ENCODE measurements at regions of chrX and their contacts with region 1.

Region 1: GRCh38 chrX:49269010-49269767 is 404 bp upstream of the PPP1R3F start:
- DNase-seq: peak; percentile 96
- ATAC-seq: peak; percentile 85
- H3K4me3 ChIP-seq: peak overlapping the region; percentile 62 to 77 (median 71)
- H3K4me3 Mint-ChIP-seq: peak overlapping the region; percentile 95
- H3K27ac ChIP-seq: peak overlapping the region; percentile 91 to 98
- H3K27ac Mint-ChIP-seq: peak overlapping the region; percentile 98
- H3K4me1 ChIP-seq: peaks cover 23 to 35% of the 10 kb centered on the region in 2 donors
- H3K4me1 Mint-ChIP-seq: peaks cover 35% of the 10 kb centered on the region
- H3K27me3 ChIP-seq: no peaks in the 10 kb centered on the region
- H3K27me3 Mint-ChIP-seq: no peaks in the 10 kb centered on the region
- CTCF ChIP-seq: no peak

Region 2: GRCh38 chrX:47658684-47659515 is 1610.3 kb before region 1 on chrX and contains the start of gene UXT:
- CTCF ChIA-PET with region 1: no interaction called
- POLR2A ChIA-PET with region 1: no interaction called
- intact Hi-C with region 1: loop called (anchors 5 kb)
- DNase-seq: peak; percentile 94
- ATAC-seq: peak; percentile 82
- H3K4me3 ChIP-seq: peak within 1 kb of the TSS; percentile 53 to 80 (median 71)
- H3K4me3 Mint-ChIP-seq: peak within 1 kb of the TSS; percentile 95
- H3K27ac ChIP-seq: peak within 1 kb of the TSS; percentile 98
- H3K27ac Mint-ChIP-seq: peak within 1 kb of the TSS; percentile 100
- H3K4me1 ChIP-seq: peaks cover 10 to 16% of the 10 kb centered on the region in 2 donors
- H3K4me1 Mint-ChIP-seq: peaks cover 16% of the 10 kb centered on the region
- H3K27me3 ChIP-seq: no peaks in the 10 kb centered on the region
- H3K27me3 Mint-ChIP-seq: no peaks in the 10 kb centered on the region
- CTCF ChIP-seq: no peak
- total RNA-seq, gene UXT: 177 and 183 TPM in 2 replicates

Region 3: DNA sequence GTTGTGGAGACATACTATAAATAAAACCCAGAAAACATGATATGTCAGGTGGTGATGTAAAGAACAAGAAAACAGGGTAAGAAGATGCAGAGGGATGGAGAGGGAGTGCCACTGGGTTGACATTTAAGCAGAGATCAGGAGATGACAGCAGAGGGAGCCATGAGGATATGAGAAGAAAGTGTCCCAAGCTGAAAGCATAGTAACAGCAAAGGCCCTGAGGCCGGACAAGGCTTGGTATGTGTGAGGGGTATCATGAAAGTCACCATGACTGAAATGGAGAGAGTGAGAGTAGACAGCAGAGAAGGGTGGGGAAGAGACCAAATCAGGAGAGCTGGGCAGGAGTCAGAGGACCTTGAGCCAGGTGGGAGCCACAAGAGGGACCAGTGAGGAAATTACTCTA is 149.1 kb before region 1 on chrX:
- CTCF ChIA-PET with region 1: no interaction called
- POLR2A ChIA-PET with region 1: no interaction called
- intact Hi-C with region 1: loop called (anchors 1 kb)
- DNase-seq: no peak
- ATAC-seq: no peak
- H3K4me3 ChIP-seq: no peak overlapping the region
- H3K4me3 Mint-ChIP-seq: peak overlapping the region; percentile 0
- H3K27ac ChIP-seq: no peak overlapping the region
- H3K27ac Mint-ChIP-seq: no peak overlapping the region
- H3K4me1 ChIP-seq: peaks cover 4 to 18% of the 10 kb centered on the region in 2 donors
- H3K4me1 Mint-ChIP-seq: peaks cover 29% of the 10 kb centered on the region
- H3K27me3 ChIP-seq: no peaks in the 10 kb centered on the region
- H3K27me3 Mint-ChIP-seq: no peaks in the 10 kb centered on the region
- CTCF ChIP-seq: no peak

Region 4: DNA sequence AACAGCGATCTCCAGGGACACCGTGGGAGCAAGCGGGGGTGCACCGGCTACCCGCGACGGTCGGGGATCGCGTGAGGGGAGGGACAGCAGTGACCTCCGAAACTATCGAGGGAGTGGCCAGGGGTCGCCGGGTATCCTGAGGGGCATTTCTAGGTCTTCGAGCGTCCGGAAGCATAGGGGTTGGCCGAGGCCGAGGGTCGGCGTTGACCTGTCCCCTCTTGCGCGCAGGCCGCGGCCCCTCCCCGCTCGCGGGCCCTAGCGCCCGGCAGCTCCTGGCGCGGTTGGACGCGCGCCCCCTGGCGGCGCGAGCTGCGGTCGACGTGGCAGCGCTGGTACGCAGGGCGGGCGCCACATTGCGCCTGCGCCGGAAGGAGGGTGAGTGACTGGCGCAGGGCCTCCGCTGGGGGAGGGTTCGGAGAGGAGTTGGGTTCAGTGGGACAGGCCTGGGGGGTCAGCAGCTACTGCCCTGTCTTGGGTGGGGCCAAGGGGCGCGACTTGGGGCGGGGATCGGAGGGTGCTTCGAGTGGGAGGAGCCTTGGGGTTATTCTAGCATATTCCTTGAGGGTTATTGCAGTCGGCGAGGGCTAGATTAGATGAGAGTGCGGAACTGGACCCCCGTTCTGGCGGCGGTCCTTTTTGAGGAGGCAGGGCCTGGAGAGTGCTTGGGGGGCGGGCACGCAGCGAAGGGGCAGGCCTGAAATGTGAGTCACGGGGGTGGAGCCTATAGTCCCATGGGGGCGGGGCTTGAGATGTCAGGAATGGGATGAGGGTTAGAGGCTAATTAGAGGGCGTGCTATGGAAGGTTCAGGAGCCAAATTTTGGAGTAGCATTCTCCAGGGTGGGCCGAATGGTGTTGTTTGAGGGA is 105.4 kb before region 1 on chrX:
- CTCF ChIA-PET with region 1: interaction called, 4 read pairs
- POLR2A ChIA-PET with region 1: no interaction called
- intact Hi-C with region 1: loop called (anchors 1 kb)
- DNase-seq: peak; percentile 89
- ATAC-seq: peak; percentile 56
- H3K4me3 ChIP-seq: peak overlapping the region in 4 of 5 experiments; percentile 39 to 62 (median 46)
- H3K4me3 Mint-ChIP-seq: peak overlapping the region; percentile 86
- H3K27ac ChIP-seq: peak overlapping the region; percentile 79 to 82
- H3K27ac Mint-ChIP-seq: peak overlapping the region; percentile 96
- H3K4me1 ChIP-seq: peaks cover 5 to 38% of the 10 kb centered on the region in 2 donors
- H3K4me1 Mint-ChIP-seq: peaks cover 26% of the 10 kb centered on the region
- H3K27me3 ChIP-seq: no peaks in the 10 kb centered on the region
- H3K27me3 Mint-ChIP-seq: no peaks in the 10 kb centered on the region
- CTCF ChIP-seq: peak; percentile 67

Region 5: DNA sequence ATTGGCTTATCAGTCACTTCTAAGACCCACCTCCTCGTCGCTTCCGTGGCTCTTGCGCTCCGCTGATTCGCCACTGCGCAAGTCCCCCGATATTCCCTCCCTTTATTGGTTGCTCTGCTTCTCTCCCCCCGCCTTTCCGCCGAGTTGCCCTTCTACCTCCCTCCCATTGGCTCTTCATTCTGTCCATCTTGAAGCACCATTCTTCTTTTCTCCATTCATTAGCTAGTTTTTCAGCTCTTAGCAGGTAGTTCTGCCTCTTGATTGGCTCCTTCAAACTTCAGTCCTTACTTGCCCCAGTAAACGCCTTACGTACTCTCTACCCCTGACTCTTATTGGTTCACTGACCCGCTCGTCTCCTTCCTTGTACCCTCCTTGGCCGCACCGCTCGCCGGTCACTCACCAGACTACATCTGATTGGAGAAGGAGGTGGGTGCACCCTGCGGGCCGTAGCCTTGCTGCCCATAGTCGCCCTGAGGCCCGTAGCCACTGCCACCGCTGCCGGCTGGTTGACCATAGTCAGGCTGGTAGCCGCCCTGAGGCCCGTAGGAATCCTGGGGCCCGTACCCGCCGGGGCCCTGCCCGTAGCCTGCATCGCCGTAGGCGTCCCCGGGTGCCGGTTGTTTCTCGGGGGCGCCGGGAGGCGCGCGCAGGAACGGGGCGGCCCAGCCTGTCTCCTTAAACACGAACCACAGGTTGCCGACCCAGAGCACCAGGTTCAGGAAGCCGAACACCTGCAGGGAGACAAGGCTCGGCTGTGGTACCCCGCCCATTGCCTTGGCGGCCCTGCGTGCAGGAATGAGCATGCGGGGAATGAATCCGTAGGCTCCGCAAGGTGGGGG is 77.9 kb before region 1 on chrX:
- CTCF ChIA-PET with region 1: interaction called, 5 read pairs
- POLR2A ChIA-PET with region 1: interaction called, 7 read pairs
- intact Hi-C with region 1: loop called (anchors 1 kb)
- DNase-seq: peak; percentile 95
- ATAC-seq: peak; percentile 84
- H3K4me3 ChIP-seq: peak overlapping the region in 4 of 5 experiments; percentile 62 to 78 (median 70)
- H3K4me3 Mint-ChIP-seq: peak overlapping the region; percentile 95
- H3K27ac ChIP-seq: peak overlapping the region; percentile 55 to 71
- H3K27ac Mint-ChIP-seq: peak overlapping the region; percentile 96
- H3K4me1 ChIP-seq: peaks cover 0 to 20% of the 10 kb centered on the region in 2 donors
- H3K4me1 Mint-ChIP-seq: peaks cover 28% of the 10 kb centered on the region
- H3K27me3 ChIP-seq: no peaks in the 10 kb centered on the region
- H3K27me3 Mint-ChIP-seq: no peaks in the 10 kb centered on the region
- CTCF ChIP-seq: no peak

Region 6: GRCh38 chrX:49199906-49200771 is 69.0 kb before region 1 on chrX and contains the start of gene SYP:
- CTCF ChIA-PET with region 1: no interaction called
- POLR2A ChIA-PET with region 1: no interaction called
- intact Hi-C with region 1: loop called (anchors 1 kb)
- DNase-seq: peak; percentile 91
- ATAC-seq: peak; percentile 99
- H3K4me3 ChIP-seq: peak within 1 kb of the TSS; percentile 35 to 59 (median 57)
- H3K4me3 Mint-ChIP-seq: peak within 1 kb of the TSS; percentile 77
- H3K27ac ChIP-seq: peak within 1 kb of the TSS; percentile 57 to 72
- H3K27ac Mint-ChIP-seq: peak within 1 kb of the TSS; percentile 70
- H3K4me1 ChIP-seq: peaks cover 4 to 13% of the 10 kb centered on the region in 2 donors
- H3K4me1 Mint-ChIP-seq: peaks cover 6% of the 10 kb centered on the region
- H3K27me3 ChIP-seq: no peaks in the 10 kb centered on the region
- H3K27me3 Mint-ChIP-seq: no peaks in the 10 kb centered on the region
- CTCF ChIP-seq: no peak
- total RNA-seq, gene SYP: 1.2 TPM in 2 replicates

Region 7: DNA sequence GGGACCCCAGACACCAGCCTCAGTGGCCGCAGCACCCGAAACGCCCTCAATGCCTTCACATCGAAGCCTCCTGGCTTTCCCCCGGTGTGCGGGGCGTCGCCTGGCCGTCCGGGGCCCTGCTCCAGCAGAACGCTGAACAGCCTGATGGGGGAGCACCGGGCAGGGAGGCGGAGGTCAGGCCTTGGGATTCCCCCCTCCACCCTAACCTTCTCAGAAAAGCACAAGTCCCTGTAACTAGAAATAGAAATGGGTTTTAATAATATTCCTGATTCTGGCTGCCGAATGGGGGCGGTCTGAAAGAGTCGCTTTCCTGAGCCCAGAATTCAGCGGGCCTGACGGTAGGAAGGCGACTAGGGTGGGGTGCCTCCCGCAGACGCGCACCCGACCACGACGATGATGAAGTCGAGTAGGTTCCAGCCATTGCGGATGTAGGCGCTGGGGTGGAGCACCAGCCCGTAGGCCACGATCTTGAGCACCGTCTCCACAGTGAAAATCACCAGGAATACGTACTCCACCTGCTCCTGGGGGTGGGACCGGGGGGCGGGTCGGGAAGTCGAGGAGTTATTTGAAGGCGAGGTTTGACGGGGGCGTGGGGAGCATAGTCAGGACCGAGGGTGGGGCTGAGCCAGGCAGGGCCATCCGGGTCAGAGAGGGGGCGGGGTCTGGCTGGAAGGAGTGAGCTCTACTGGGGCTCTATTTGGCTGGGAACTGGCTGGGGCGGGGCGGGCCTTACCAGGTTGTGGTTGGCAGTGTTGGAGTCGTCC is 38.5 kb before region 1 on chrX:
- CTCF ChIA-PET with region 1: no interaction called
- POLR2A ChIA-PET with region 1: interaction called, 3 read pairs
- intact Hi-C with region 1: loop called (anchors 1 kb)
- DNase-seq: peak; percentile 77
- ATAC-seq: peak; percentile 75
- H3K4me3 ChIP-seq: peak overlapping the region in 4 of 5 experiments; percentile 54 to 64 (median 60)
- H3K4me3 Mint-ChIP-seq: peak overlapping the region; percentile 89
- H3K27ac ChIP-seq: peak overlapping the region; percentile 87 to 88
- H3K27ac Mint-ChIP-seq: peak overlapping the region; percentile 97
- H3K4me1 ChIP-seq: peaks cover 5 to 21% of the 10 kb centered on the region in 2 donors
- H3K4me1 Mint-ChIP-seq: peaks cover 18% of the 10 kb centered on the region
- H3K27me3 ChIP-seq: no peaks in the 10 kb centered on the region
- H3K27me3 Mint-ChIP-seq: no peaks in the 10 kb centered on the region
- CTCF ChIP-seq: peak; percentile 36

Region 8: GRCh38 chrX:50103866-50104566 is 834.8 kb after region 1 on chrX:
- CTCF ChIA-PET with region 1: no interaction called
- POLR2A ChIA-PET with region 1: no interaction called
- intact Hi-C with region 1: no loop called
- DNase-seq: no peak
- ATAC-seq: no peak
- H3K4me3 ChIP-seq: no peak overlapping the region
- H3K4me3 Mint-ChIP-seq: no peak overlapping the region
- H3K27ac ChIP-seq: no peak overlapping the region
- H3K27ac Mint-ChIP-seq: no peak overlapping the region
- H3K4me1 ChIP-seq: no peaks in the 10 kb centered on the region
- H3K4me1 Mint-ChIP-seq: peaks cover 2% of the 10 kb centered on the region
- H3K27me3 ChIP-seq: no peaks in the 10 kb centered on the region
- H3K27me3 Mint-ChIP-seq: no peaks in the 10 kb centered on the region
- CTCF ChIP-seq: no peak